Activated CD8-positive, alpha-beta T cell treated with anti-CD3 and anti-CD28 coated beads, Interleukin-2, amount 10 ng/mL, durations not matched to agents 7 days and 5 days (primary cell): ENCODE measurements at regions of chr6 and their contacts with region 1.

Region 1: DNA sequence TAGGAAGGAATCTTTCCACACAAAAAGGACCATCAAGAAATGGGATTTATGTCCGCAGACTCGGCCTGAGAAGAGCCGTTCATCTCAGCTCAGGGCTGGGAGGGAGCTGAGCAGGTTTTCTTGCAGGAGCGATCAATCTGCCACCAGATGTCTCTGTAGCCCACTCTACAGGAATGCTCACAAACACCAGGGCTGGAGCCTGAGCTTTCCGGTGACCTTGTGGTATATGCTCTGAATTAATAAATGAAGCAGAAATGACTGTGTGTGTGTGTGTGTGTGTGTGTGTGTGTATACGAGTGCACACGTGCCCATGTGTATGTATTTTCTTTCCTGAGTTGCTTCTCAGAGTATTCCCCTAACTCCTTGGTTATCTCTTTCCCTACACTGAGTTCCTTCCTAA is 12.0 kb downstream of the CD83 start:
- DNase-seq: peak; percentile 66
- ATAC-seq: peak; percentile 72
- H3K4me3 Mint-ChIP-seq: no peak overlapping the region
- H3K27ac Mint-ChIP-seq: no peak overlapping the region
- H3K4me1 Mint-ChIP-seq: peaks cover 18% of the 10 kb centered on the region
- H3K27me3 Mint-ChIP-seq: no peaks in the 10 kb centered on the region

Region 2: GRCh38 chr6:13624871-13625288 is 504.7 kb before region 1 on chr6:
- CTCF ChIA-PET with region 1: no interaction called
- POLR2A ChIA-PET with region 1: no interaction called
- DNase-seq: peak; percentile 48
- ATAC-seq: peak; percentile 77
- H3K4me3 Mint-ChIP-seq: no peak overlapping the region
- H3K27ac Mint-ChIP-seq: peak overlapping the region; percentile 62
- H3K4me1 Mint-ChIP-seq: peaks cover 2% of the 10 kb centered on the region
- H3K27me3 Mint-ChIP-seq: no peaks in the 10 kb centered on the region

Region 3: GRCh38 chr6:14118091-14118439 is 11.5 kb before region 1 on chr6:
- CTCF ChIA-PET with region 1: interaction called, 17 read pairs
- POLR2A ChIA-PET with region 1: interaction called, 6 read pairs
- DNase-seq: no peak
- ATAC-seq: peak; percentile 12
- H3K4me3 Mint-ChIP-seq: peak overlapping the region; percentile 90
- H3K27ac Mint-ChIP-seq: peak overlapping the region; percentile 90
- H3K4me1 Mint-ChIP-seq: peaks cover 35% of the 10 kb centered on the region
- H3K27me3 Mint-ChIP-seq: peaks cover 7% of the 10 kb centered on the region

Region 4: DNA sequence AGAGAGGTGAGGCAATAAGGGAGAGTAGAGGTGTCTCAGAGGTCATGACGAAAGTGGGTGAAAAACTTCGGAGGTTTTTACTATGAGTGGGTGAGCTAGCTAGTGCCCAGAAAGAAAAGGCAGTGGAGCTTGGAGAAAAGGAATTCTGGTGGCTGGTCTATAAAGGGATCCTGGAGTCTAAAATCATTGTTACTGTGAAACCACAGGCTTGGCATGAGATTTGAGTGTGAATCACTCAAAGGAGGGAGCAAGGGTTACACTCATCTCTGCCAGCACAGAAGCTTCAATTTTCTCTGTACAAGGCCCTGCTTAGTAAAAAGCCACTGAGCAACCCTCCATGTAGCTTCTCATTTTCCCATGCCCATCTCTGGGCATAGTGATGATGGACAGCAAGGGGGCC is 35.5 kb after region 1 on chr6:
- CTCF ChIA-PET with region 1: no interaction called
- POLR2A ChIA-PET with region 1: no interaction called
- DNase-seq: no peak
- ATAC-seq: no peak
- H3K4me3 Mint-ChIP-seq: no peak overlapping the region
- H3K27ac Mint-ChIP-seq: no peak overlapping the region
- H3K4me1 Mint-ChIP-seq: no peaks in the 10 kb centered on the region
- H3K27me3 Mint-ChIP-seq: peaks cover 4% of the 10 kb centered on the region

Region 5: GRCh38 chr6:14824484-14825275 is 695.1 kb after region 1 on chr6:
- CTCF ChIA-PET with region 1: no interaction called
- POLR2A ChIA-PET with region 1: no interaction called
- DNase-seq: no peak
- ATAC-seq: no peak
- H3K4me3 Mint-ChIP-seq: no peak overlapping the region
- H3K27ac Mint-ChIP-seq: no peak overlapping the region
- H3K4me1 Mint-ChIP-seq: no peaks in the 10 kb centered on the region
- H3K27me3 Mint-ChIP-seq: peaks cover 3% of the 10 kb centered on the region